Activated naive CD4-positive, alpha-beta T cell treated with anti-CD3 and anti-CD28 coated beads, Interleukin-2, amount 10 ng/mL, durations not matched to agents 7 days and 5 days (primary cell): ENCODE measurements at regions of chr1 and their contacts with region 1.

Region 1: GRCh38 chr1:155084722-155085503 is 6.3 kb downstream of the EFNA3 start:
- DNase-seq: peak; percentile 94
- H3K4me3 Mint-ChIP-seq: peak overlapping the region; percentile 82
- H3K27ac Mint-ChIP-seq: peak overlapping the region; percentile 92
- H3K4me1 Mint-ChIP-seq: peaks cover 45% of the 10 kb centered on the region
- H3K27me3 Mint-ChIP-seq: peaks cover 60% of the 10 kb centered on the region

Region 2: GRCh38 chr1:154533952-154534844 is 550.7 kb before region 1 on chr1:
- CTCF ChIA-PET with region 1: no interaction called
- DNase-seq: no peak
- H3K4me3 Mint-ChIP-seq: no peak overlapping the region
- H3K27ac Mint-ChIP-seq: no peak overlapping the region
- H3K4me1 Mint-ChIP-seq: no peaks in the 10 kb centered on the region
- H3K27me3 Mint-ChIP-seq: peaks cover 49% of the 10 kb centered on the region

Region 3: GRCh38 chr1:155017041-155017945 is 67.6 kb before region 1 on chr1:
- CTCF ChIA-PET with region 1: interaction called, 14 read pairs
- DNase-seq: peak; percentile 90
- H3K4me3 Mint-ChIP-seq: peak overlapping the region; percentile 26
- H3K27ac Mint-ChIP-seq: peak overlapping the region; percentile 83
- H3K4me1 Mint-ChIP-seq: peaks cover 71% of the 10 kb centered on the region
- H3K27me3 Mint-ChIP-seq: no peaks in the 10 kb centered on the region

Region 4: DNA sequence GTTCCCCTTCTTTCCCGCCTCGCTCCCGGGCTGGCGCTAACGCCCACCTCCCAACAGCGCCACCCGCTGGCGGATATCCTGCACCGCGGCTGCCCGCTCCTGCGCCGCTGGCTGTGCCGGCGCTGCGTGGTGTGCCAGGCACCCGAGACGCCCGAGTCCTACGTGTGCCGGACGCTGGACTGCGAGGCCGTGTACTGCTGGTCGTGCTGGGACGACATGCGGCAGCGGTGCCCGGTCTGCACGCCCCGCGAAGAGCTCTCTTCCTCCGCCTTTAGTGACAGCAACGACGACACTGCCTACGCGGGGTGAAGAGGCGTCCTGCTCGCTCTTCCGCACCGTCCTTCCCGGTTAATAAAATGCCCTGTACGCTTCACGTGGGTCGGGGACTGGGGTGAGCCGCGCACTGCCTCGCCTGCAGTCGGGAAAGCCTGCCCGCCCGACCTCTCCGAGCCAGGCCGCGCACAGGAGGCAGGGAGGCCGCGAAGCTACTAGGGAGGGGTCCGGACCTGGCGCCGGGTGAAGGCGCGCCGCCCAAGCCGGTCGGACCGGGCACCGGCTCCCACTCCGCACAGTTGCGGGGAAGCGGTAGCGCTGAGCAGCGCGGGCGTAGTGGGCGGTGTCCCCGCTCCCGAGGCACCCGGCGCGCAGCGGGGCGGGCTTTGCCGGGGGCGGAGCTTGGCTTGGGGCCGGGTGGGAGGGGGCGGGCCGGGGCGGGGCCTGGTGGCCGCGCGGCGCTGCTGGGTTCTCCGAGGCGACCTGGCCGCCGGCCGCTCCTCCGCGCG is 34.2 kb before region 1 on chr1 and contains the start of gene ADAM15:
- CTCF ChIA-PET with region 1: interaction called, 46 read pairs
- DNase-seq: peak; percentile 85
- H3K4me3 Mint-ChIP-seq: peak within 1 kb of the TSS; percentile 82
- H3K27ac Mint-ChIP-seq: peak within 1 kb of the TSS; percentile 81
- H3K4me1 Mint-ChIP-seq: peaks cover 30% of the 10 kb centered on the region
- H3K27me3 Mint-ChIP-seq: peaks cover 12% of the 10 kb centered on the region

Region 5: DNA sequence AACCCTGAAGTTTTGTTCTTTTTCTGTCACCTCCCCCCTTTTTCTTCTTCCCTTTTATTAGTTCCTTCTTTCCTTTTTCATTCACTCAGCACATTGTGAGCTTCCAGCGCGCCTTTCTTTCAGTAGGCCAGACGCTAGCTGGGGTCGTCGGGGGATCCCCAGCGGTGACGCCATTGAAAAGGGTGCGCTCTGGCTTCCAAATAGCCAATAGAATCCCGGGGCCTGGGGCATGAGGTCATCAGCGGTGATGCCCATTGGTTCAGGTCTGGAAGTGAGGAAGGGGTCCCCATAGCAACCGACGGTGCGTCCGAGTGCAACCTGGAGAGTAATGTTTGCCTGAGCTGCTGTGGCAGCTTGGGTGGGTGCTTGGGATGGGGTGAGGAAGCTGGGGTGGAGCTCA is 13.2 kb before region 1 on chr1:
- CTCF ChIA-PET with region 1: interaction called, 140 read pairs
- DNase-seq: no peak
- H3K4me3 Mint-ChIP-seq: peak overlapping the region; percentile 13
- H3K27ac Mint-ChIP-seq: no peak overlapping the region
- H3K4me1 Mint-ChIP-seq: peaks cover 59% of the 10 kb centered on the region
- H3K27me3 Mint-ChIP-seq: peaks cover 28% of the 10 kb centered on the region

Region 6: GRCh38 chr1:155167166-155168104 is 82.5 kb after region 1 on chr1:
- CTCF ChIA-PET with region 1: interaction called, 226 read pairs
- DNase-seq: peak; percentile 93
- H3K4me3 Mint-ChIP-seq: peak overlapping the region; percentile 12
- H3K27ac Mint-ChIP-seq: no peak overlapping the region
- H3K4me1 Mint-ChIP-seq: peaks cover 31% of the 10 kb centered on the region
- H3K27me3 Mint-ChIP-seq: peaks cover 21% of the 10 kb centered on the region

Region 7: DNA sequence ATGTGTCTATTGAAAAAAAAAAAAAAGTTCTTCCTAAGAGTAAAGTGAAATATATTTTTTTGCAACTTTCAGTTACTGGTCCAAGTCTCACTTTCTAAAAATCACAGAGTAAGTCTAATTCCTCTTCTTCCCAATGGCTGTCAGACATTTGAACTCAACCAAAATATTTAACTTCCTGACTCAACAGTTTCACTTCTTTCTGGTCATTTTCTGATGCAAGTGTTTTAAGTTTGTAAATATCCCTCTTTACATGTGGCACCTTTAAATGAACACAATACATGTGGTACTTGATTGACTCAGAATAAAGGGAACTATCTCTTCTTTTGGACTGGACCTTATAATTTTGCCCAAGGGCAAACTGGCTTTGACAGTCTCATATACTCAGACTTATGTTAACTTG is 401.0 kb after region 1 on chr1:
- CTCF ChIA-PET with region 1: no interaction called
- DNase-seq: no peak
- H3K4me3 Mint-ChIP-seq: no peak overlapping the region
- H3K27ac Mint-ChIP-seq: no peak overlapping the region
- H3K4me1 Mint-ChIP-seq: peaks cover 6% of the 10 kb centered on the region
- H3K27me3 Mint-ChIP-seq: no peaks in the 10 kb centered on the region